ENCODE measurements at regions of chr19 and their contacts with region 1.

Region 1: DNA sequence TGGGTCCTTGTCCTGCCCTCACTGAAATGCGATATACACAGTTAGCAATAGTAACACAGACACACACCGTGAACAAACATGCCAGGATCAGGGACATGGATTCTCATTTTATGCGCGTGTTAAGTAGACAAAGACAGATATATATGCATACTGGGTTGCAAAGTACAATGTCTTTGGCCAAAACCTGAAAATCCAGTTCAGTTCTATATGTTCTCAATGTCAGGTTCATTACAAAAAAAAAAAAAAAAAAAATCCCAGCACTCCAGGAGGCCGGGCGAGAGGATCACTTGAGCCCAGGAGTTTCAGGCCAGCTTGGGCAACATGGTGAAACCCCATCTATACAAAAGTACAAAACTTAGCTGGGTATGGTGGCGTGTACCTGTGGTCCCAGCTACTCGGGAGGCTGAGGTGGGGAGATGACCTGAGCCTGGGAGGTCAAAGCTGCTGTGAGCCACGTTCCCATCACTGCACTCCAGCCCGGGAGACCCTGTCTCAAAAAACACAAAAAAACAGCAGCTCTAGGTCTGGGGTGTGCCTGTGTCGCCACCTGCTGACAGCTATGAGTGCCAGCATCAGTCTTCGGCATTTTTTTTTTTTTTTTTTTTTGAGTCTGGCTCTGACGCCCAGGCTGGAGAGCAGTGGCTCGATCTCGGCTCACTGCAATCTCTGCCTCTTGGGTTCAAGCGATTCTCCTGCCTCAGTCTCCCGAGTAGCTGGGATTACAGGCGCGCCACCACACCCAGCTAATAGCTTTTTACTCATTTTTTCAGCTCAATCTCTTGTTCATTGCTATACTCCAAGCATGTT is 10.3 kb downstream of the AP2S1 start:
- DNase-seq: peak; percentile 69

Region 2: GRCh38 chr19:46753420-46754155 is 86.8 kb before region 1 on chr19:
- CTCF ChIA-PET with region 1: interaction called, 30 read pairs
- POLR2A ChIA-PET with region 1: interaction called, 3 read pairs
- DNase-seq: peak; percentile 61

Region 3: GRCh38 chr19:46766569-46767317 is 73.6 kb before region 1 on chr19:
- CTCF ChIA-PET with region 1: interaction called, 10 read pairs
- POLR2A ChIA-PET with region 1: no interaction called
- DNase-seq: peak; percentile 74

Region 4: DNA sequence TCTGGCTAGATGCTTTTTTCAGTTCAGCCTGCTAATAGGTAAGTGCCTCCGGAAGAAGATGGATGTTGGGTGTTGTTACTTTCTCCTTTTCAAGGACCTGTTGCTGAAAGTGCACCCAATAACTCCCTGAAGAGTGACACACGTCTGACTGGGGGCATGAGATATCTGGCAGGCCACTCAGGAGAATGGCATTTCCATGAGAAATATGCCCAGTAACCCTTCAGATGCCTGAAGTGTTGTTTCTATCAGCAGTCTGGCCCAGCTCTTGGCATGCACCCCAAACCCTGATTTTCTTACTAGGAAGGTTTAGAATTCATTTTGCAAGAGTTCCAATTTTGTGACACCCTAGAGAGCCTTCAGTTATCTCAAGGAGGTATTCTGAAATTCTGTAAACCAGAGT is 92.0 kb after region 1 on chr19:
- CTCF ChIA-PET with region 1: no interaction called
- POLR2A ChIA-PET with region 1: no interaction called
- DNase-seq: no peak

Measured in HEK293T (cell line).